ENCODE measurements at regions of chr20 and their contacts with region 1.

Region 1: GRCh38 chr20:11302436-11302835 is 615.3 kb upstream of the BTBD3 start:
- DNase-seq: peak; percentile 81
- ATAC-seq: peak; percentile 98
- H3K4me3 ChIP-seq: no peak overlapping the region
- H3K27ac ChIP-seq: no peak overlapping the region
- H3K4me1 ChIP-seq: peaks cover 5% of the 10 kb centered on the region
- H3K27me3 ChIP-seq: no peaks in the 10 kb centered on the region
- CTCF ChIP-seq: no peak
- POLR2A ChIP-seq: no peak
- RAD21 ChIP-seq: no peak

Region 2: GRCh38 chr20:11350126-11351005 is 47.9 kb after region 1 on chr20:
- CTCF ChIA-PET with region 1: interaction called, 3 read pairs
- POLR2A ChIA-PET with region 1: no interaction called
- dilution Hi-C with region 1: no loop called
- in situ Hi-C with region 1: no loop called
- intact Hi-C with region 1: loop called (anchors 5 kb)
- DNase-seq: peak; percentile 80
- ATAC-seq: peak; percentile 86
- H3K4me3 ChIP-seq: no peak overlapping the region
- H3K27ac ChIP-seq: peak overlapping the region; percentile 28; the same call in 1 of the 2 replicates
- H3K4me1 ChIP-seq: peaks cover 10% of the 10 kb centered on the region
- H3K27me3 ChIP-seq: no peaks in the 10 kb centered on the region
- CTCF ChIP-seq: 0 out of 2 replicates have a peak, but pooled peaks have one; percentile 25
- POLR2A ChIP-seq: no peak
- RAD21 ChIP-seq: peak; percentile 30; the same call in 1 of the 2 replicates

Measured in IMR-90 (cell line).